ENCODE measurements at regions of chr13 and their contacts with region 1.

Region 1: DNA sequence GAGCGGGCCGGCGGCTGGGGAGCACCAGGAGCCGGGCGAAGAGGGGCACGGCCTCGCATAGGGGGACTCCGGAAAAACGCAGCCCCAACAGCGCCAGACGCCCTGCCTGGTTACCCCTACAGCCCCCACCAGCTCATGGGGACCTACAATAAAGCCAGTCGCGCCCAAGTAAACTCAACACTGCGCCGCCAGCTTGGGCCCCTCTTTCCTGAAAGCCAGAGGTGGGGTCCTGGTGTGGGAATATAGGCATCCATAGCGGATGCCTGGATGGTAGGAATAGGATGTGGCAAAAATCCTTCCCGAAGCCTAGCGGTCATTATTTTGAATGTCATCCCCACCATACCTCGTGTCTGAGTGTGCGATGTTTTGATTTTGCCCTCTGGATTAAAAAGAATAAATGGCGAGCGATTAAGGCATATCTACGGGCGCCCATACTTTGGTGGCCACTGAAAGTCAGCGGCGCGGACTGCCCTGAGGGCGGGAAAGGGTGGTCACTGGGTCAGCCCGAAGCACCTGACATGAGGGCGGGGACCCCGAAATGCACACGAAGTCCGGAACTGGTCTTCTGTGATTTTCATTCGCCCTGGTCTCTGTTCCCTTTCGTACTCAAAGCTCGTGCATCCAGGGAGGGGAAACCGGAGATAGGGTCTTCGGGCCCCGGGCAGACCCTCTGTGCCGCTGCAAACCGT is at the starts of genes NHLRC3 and PROSER1:
- DNase-seq: peak; percentile 86
- H3K4me3 Mint-ChIP-seq: peak within 1 kb of the TSS; percentile 90
- H3K27ac Mint-ChIP-seq: peak within 1 kb of the TSS; percentile 90
- H3K4me1 Mint-ChIP-seq: peaks cover 41% of the 10 kb centered on the region
- H3K27me3 Mint-ChIP-seq: no peaks in the 10 kb centered on the region
- total RNA-seq, gene NHLRC3: 12.0 to 13.1 TPM
- total RNA-seq, gene PROSER1: 73.4 to 78.8 TPM

Region 2: DNA sequence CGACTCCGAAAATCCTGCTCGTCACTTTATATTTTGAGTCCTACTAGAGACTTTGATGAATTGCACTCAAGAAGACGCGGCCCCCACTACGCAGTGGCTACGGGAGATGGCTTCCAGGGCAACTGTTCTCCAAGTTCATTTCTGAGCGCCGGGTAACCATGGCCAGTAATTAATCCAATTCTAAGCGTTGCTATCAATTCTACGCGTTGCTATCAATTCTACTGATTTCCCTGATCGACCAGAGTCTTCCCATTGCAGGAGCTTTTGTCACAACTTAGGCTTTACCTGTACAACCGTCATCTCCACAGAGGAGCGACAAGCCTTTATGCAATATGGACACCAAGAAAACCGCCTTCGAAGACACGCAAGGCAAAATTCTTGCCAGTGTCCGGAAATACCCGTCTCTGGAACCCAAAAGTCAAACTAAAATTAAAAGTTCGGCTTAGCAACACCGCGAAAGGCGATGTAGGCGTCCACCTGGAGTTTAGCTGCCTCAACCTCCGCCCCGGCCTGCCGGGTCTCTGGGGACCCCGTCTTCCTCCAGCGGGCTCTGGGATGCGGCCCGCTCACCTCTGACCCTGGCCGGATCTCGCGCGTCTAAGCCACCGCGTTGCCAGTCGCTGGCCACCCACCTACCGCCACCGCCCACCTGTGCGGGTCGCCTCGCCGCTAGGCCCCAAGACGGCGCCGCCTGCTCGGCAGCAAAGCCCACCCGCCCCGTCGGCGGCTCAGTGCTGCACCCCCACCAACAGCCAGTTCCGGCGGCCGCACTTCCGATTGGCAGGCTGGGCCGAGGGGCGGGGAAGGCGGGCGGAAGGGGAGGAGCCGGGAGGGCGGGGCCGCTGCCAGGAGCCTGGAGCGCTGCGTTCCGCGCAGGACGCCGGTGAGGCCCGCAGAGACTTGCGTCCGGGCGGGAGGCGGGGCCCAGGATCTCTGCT is 1978.8 kb before region 1 on chr13 and contains the start of gene SUPT20H:
- CTCF ChIA-PET with region 1: no interaction called
- intact Hi-C with region 1: loop called (anchors 1 kb)
- DNase-seq: peak; percentile 94
- H3K4me3 Mint-ChIP-seq: peak within 1 kb of the TSS; percentile 97
- H3K27ac Mint-ChIP-seq: peak within 1 kb of the TSS; percentile 90
- H3K4me1 Mint-ChIP-seq: peaks cover 33% of the 10 kb centered on the region
- H3K27me3 Mint-ChIP-seq: no peaks in the 10 kb centered on the region
- total RNA-seq, gene SUPT20H: 51.0 to 57.7 TPM

Region 3: GRCh38 chr13:39016787-39017186 is 21.2 kb before region 1 on chr13:
- CTCF ChIA-PET with region 1: interaction called, 4 read pairs
- intact Hi-C with region 1: loop called (anchors 2 kb)
- DNase-seq: peak; percentile 19
- H3K4me3 Mint-ChIP-seq: no peak overlapping the region
- H3K27ac Mint-ChIP-seq: no peak overlapping the region
- H3K4me1 Mint-ChIP-seq: peaks cover 6% of the 10 kb centered on the region
- H3K27me3 Mint-ChIP-seq: no peaks in the 10 kb centered on the region

Region 4: DNA sequence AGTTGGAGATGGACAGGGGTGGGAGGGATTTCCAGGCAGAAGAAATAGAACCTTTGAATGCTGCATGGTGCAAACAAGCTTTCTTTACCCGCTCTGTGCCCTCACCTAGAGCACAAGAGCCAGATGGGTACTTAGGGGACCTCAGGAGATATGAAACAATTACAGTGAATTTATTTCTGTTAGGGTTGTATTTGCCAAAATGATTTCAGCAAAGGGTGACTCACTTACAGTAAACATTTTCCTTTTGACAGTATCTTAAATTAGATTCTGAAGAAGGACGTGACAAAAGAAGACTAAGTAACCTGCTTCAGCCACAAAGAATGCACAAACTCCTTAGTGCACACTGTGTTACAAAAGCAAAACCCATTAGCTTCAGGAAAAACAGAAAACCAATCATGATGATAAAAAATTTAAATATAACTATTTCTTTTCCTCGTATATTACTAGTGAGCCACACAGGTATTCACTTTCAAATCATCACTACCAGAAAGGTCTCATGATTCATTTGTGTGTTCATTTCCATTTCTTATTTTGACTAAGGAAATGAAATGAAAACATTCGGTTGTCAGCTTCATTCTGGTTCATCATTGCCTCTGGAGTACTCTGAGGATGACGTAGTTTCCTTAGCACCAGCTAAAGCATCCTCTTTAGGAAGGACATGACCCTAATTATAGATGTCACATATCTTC is 159.1 kb after region 1 on chr13:
- CTCF ChIA-PET with region 1: no interaction called
- intact Hi-C with region 1: loop called (anchors 1 kb)
- DNase-seq: no peak
- H3K4me3 Mint-ChIP-seq: no peak overlapping the region
- H3K27ac Mint-ChIP-seq: peak overlapping the region; percentile 60
- H3K4me1 Mint-ChIP-seq: peaks cover 11% of the 10 kb centered on the region
- H3K27me3 Mint-ChIP-seq: peaks cover 17% of the 10 kb centered on the region

Region 5: GRCh38 chr13:39406688-39407087 is 368.7 kb after region 1 on chr13:
- CTCF ChIA-PET with region 1: no interaction called
- intact Hi-C with region 1: no loop called
- DNase-seq: no peak
- H3K4me3 Mint-ChIP-seq: no peak overlapping the region
- H3K27ac Mint-ChIP-seq: no peak overlapping the region
- H3K4me1 Mint-ChIP-seq: no peaks in the 10 kb centered on the region
- H3K27me3 Mint-ChIP-seq: peaks cover 18% of the 10 kb centered on the region

Region 6: DNA sequence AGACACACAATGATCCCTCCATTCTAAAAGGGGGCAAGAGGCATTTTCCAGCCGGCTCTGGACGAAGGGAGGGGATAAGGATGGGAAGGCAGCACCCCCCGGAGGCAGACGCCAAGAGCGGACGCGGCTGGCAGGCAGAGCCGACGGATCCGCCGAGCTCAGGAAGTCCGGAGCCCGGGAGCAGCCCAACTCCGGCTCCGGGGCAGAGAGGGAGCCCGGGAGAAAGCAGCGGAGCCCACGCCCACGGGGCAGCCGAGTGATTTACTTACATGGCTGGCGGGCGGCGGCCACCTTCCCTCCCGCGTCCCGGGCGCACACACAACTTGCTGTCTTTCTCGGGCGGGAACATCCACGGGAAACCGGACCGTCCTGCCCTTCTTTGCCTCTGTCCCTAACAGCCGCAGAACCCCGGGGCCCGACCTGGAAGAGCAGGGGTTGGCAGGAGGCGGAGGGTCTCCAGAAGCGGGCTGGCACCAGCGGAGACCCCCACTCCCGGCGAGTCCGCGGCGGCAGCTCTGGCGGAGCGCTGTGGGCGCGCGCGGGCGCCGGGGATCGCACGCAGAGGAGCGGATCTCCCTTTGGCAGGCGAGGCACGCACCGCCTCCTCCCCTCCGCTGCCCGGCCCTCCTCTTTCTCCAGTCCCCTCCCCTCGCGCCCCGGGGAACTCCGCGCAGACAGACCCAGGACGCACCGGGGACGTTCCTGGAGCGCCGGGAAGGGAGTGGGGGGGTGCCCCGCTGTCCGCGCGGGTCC is 564.8 kb after region 1 on chr13 and contains the start of gene LHFPL6:
- CTCF ChIA-PET with region 1: interaction called, 6 read pairs
- intact Hi-C with region 1: loop called (anchors 2 kb)
- DNase-seq: peak; percentile 85
- H3K4me3 Mint-ChIP-seq: peak within 1 kb of the TSS; percentile 73
- H3K27ac Mint-ChIP-seq: no peak within 1 kb of the TSS
- H3K4me1 Mint-ChIP-seq: peaks cover 11% of the 10 kb centered on the region
- H3K27me3 Mint-ChIP-seq: peaks cover 41% of the 10 kb centered on the region
- total RNA-seq, gene LHFPL6: 1.2 to 1.5 TPM

Region 7: DNA sequence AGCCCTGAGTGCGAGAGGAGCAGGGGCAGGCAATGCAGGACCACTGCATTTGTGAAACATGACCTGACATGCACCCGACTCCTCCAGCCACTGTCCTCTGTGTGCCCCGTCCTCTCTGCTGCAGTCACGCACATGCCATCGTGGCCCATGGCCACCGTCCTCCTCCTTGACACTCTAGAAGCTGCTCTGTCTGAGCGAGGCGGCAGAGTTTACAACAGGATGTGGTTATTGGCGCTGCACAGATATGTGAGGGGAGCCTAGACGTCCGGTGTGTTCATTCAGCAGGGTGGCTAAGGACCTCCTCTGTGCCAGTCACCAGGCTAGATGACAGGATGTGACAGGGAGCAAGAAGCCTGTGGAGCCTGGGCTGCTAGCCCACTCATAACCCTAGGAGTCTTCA is 1350.6 kb after region 1 on chr13:
- CTCF ChIA-PET with region 1: no interaction called
- intact Hi-C with region 1: loop called (anchors 2 kb)
- DNase-seq: peak; percentile 94
- H3K4me3 Mint-ChIP-seq: peak overlapping the region; percentile 77
- H3K27ac Mint-ChIP-seq: peak overlapping the region; percentile 92
- H3K4me1 Mint-ChIP-seq: peaks cover 51% of the 10 kb centered on the region
- H3K27me3 Mint-ChIP-seq: no peaks in the 10 kb centered on the region

Region 8: GRCh38 chr13:41019011-41019487 is 1981.0 kb after region 1 on chr13 and contains the start of gene ELF1:
- CTCF ChIA-PET with region 1: no interaction called
- intact Hi-C with region 1: loop called (anchors 10 kb)
- DNase-seq: peak; percentile 67
- H3K4me3 Mint-ChIP-seq: peak within 1 kb of the TSS; percentile 89
- H3K27ac Mint-ChIP-seq: peak within 1 kb of the TSS; percentile 99
- H3K4me1 Mint-ChIP-seq: peaks cover 32% of the 10 kb centered on the region
- H3K27me3 Mint-ChIP-seq: no peaks in the 10 kb centered on the region
- total RNA-seq, gene ELF1: 61.7 to 62.3 TPM

Measured in activated naive CD4-positive, alpha-beta T cell treated with anti-CD3 and anti-CD28 coated beads for 36 hours (primary cell).